Caco-2 (cell line): ENCODE measurements at regions of chr7 and their contacts with region 1.

Region 1: DNA sequence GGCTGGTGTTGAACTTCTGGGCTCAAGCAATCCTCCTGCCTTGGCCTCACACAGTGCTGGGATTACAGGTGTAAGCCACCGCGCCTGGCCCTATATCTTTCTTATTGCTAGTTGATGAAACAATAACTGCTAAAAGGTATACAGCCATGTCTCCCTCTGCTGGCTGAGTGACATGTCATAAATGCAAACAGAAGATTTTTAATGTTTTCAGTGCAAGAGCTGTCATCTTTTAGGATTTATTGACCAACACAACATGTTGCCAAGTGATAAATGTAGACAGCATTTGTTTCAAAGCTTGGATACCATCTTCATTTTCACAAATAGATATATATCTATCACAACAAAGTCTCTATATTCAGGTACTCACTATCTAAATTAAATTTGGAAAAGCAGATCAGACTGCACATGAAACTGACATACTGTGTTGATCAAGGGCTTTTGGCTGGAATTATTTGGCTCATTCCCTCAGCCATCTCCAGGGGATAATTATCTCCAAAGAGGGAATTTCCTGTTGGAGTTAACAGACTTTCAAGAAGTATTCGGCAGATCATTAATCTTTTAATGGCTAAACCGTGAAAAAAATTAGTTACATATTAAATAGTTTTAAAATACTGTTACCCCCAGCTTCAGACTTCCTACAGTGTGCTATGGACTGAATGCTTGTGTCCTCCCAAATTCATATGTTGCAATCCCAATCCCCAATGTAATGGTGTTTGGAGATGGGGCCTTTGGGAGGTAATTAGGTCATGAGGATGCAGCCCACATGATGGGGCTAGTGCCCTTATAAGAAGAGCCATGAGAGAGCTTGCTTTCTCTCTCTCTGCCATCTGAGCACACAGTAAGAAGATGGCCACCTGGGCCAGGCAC is 41.3 kb upstream of the SRPK2 start:
- DNase-seq: peak; percentile 46 to 48
- H3K4me3 ChIP-seq: no peak overlapping the region
- H3K4me3 Mint-ChIP-seq: no peak overlapping the region
- H3K27ac Mint-ChIP-seq: no peak overlapping the region
- H3K4me1 ChIP-seq: no peaks in the 10 kb centered on the region
- H3K4me1 Mint-ChIP-seq: no peaks in the 10 kb centered on the region
- H3K27me3 ChIP-seq: no peaks in the 10 kb centered on the region
- H3K27me3 Mint-ChIP-seq: no peaks in the 10 kb centered on the region
- CTCF ChIP-seq: peak; percentile 39 to 60

Region 2: GRCh38 chr7:103777440-103777839 is 1652.5 kb before region 1 on chr7:
- CTCF ChIA-PET with region 1: no interaction called
- POLR2A ChIA-PET with region 1: interaction called, 12 read pairs
- intact Hi-C with region 1: no loop called
- DNase-seq: no peak
- H3K4me3 ChIP-seq: no peak overlapping the region
- H3K4me3 Mint-ChIP-seq: no peak overlapping the region
- H3K27ac Mint-ChIP-seq: no peak overlapping the region
- H3K4me1 ChIP-seq: no peaks in the 10 kb centered on the region
- H3K4me1 Mint-ChIP-seq: no peaks in the 10 kb centered on the region
- H3K27me3 ChIP-seq: no peaks in the 10 kb centered on the region
- H3K27me3 Mint-ChIP-seq: no peaks in the 10 kb centered on the region
- CTCF ChIP-seq: no peak

Region 3: DNA sequence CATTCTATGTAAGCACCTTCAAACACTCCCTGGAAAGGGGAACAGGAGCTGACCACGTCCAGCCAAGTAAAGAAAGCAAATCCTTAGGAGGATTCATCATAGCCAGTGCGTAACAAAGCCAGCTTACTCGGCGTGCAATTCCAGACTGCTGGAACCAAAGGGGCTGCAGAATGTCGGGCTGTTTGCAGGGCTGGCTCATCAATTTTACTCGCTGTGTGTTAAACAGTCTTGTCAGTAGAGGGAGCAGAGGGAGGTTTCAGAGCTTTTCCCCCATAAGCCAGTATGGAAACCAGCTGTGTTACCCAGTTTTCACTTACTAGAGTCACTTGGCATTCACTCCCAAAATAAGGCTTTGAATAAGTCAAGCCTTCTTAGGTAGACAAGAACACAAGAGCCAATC is 288.9 kb before region 1 on chr7:
- CTCF ChIA-PET with region 1: no interaction called
- POLR2A ChIA-PET with region 1: no interaction called
- intact Hi-C with region 1: loop called (anchors 10 kb)
- DNase-seq: peak in 1 of 2 experiments; percentile 29
- H3K4me3 ChIP-seq: no peak overlapping the region
- H3K4me3 Mint-ChIP-seq: no peak overlapping the region
- H3K27ac Mint-ChIP-seq: no peak overlapping the region
- H3K4me1 ChIP-seq: no peaks in the 10 kb centered on the region
- H3K4me1 Mint-ChIP-seq: peaks cover 10% of the 10 kb centered on the region
- H3K27me3 ChIP-seq: no peaks in the 10 kb centered on the region
- H3K27me3 Mint-ChIP-seq: no peaks in the 10 kb centered on the region
- CTCF ChIP-seq: peak; percentile 19 to 56

Region 4: GRCh38 chr7:105399043-105399725 is 30.8 kb before region 1 on chr7:
- CTCF ChIA-PET with region 1: interaction called, 6 read pairs
- POLR2A ChIA-PET with region 1: no interaction called
- intact Hi-C with region 1: loop called (anchors 1 kb)
- DNase-seq: no peak
- H3K4me3 ChIP-seq: no peak overlapping the region
- H3K4me3 Mint-ChIP-seq: no peak overlapping the region
- H3K27ac Mint-ChIP-seq: no peak overlapping the region
- H3K4me1 ChIP-seq: no peaks in the 10 kb centered on the region
- H3K4me1 Mint-ChIP-seq: peaks cover 7% of the 10 kb centered on the region
- H3K27me3 ChIP-seq: no peaks in the 10 kb centered on the region
- H3K27me3 Mint-ChIP-seq: no peaks in the 10 kb centered on the region
- CTCF ChIP-seq: peak in 1 of 2 experiments; percentile 25

Region 5: DNA sequence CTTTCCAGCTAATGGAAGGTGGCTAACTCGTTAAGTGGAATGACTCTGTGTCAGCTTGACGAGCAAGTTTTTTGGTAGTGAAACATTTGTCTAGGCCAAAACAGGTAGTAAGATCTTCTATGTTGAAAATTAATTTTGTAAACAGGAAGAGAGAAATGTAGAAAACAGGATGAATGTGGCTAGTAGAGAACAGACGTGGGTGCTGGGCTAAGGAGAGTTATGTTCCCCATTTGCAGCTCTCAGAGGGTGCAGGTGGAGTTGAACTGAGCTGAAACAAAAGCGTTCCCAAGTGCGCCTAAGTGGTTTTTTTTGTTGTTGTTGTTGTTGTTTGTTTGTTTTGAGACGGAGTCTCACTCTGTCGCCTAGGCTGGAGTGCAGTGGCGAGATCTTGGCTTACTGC is 18.2 kb after region 1 on chr7:
- CTCF ChIA-PET with region 1: no interaction called
- POLR2A ChIA-PET with region 1: no interaction called
- intact Hi-C with region 1: no loop called
- DNase-seq: no peak
- H3K4me3 ChIP-seq: no peak overlapping the region
- H3K4me3 Mint-ChIP-seq: no peak overlapping the region
- H3K27ac Mint-ChIP-seq: no peak overlapping the region
- H3K4me1 ChIP-seq: no peaks in the 10 kb centered on the region
- H3K4me1 Mint-ChIP-seq: no peaks in the 10 kb centered on the region
- H3K27me3 ChIP-seq: no peaks in the 10 kb centered on the region
- H3K27me3 Mint-ChIP-seq: no peaks in the 10 kb centered on the region
- CTCF ChIP-seq: no peak

Region 6: GRCh38 chr7:105487579-105488571 is 57.9 kb after region 1 on chr7:
- CTCF ChIA-PET with region 1: no interaction called
- POLR2A ChIA-PET with region 1: no interaction called
- intact Hi-C with region 1: loop called (anchors 1 kb)
- DNase-seq: peak; percentile 48 to 54
- H3K4me3 ChIP-seq: no peak overlapping the region
- H3K4me3 Mint-ChIP-seq: no peak overlapping the region
- H3K27ac Mint-ChIP-seq: no peak overlapping the region
- H3K4me1 ChIP-seq: peaks cover 13% of the 10 kb centered on the region; the same call in 1 of the 2 replicates
- H3K4me1 Mint-ChIP-seq: peaks cover 6% of the 10 kb centered on the region
- H3K27me3 ChIP-seq: no peaks in the 10 kb centered on the region
- H3K27me3 Mint-ChIP-seq: no peaks in the 10 kb centered on the region
- CTCF ChIP-seq: peak; percentile 38 to 57